Activated T-helper 2 cell treated with anti-CD3 and anti-CD28 coated beads, Interferon-gamma antibody, Interleukin-2, Interleukin-4, amounts not matched to agents 10 μg/mL and 5 μg/mL and 100 μg/mL, durations not matched to agents 14 hours and 24 hours and 36 hours (primary cell): ENCODE measurements at regions of chr5 and their contacts with region 1.

Region 1: GRCh38 chr5:91383027-91383955 is at the start of gene ARRDC3:
- DNase-seq: peak; percentile 96
- H3K4me3 Mint-ChIP-seq: peak within 1 kb of the TSS; percentile 98
- H3K27ac Mint-ChIP-seq: peak within 1 kb of the TSS; percentile 100
- H3K4me1 Mint-ChIP-seq: peaks cover 26% of the 10 kb centered on the region
- H3K27me3 Mint-ChIP-seq: no peaks in the 10 kb centered on the region
- total RNA-seq, gene ARRDC3: 17.6 TPM in 2 replicates

Region 2: DNA sequence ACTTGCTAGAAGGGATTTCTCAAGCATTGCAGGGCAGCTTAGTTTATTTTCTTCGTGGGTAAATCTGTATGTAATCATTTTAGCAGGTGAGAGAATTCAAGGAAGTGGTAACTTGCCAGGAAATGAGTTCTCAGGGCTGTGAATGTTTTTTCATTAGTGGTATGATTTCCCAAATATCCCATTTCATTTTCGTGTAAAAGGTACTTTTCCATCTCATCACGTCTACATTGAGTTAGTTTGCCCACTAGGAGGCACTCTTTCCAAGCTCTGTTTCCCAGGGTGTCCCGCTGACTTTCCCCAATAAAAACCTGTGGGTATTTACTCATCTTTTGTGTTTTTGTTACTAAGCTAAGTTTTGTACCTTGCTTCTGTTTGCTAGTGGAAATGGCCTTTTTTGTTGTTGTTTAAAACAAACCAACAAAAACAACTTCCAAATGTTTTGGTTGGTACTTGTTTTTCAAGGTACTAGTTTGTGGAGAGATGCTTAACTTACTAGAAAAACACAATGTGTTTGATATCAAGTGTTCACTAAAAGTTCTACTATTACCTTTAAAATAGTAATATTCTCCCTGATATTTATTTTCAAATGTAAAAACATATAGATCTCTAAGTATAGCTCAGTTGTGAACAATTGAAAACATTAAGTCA is 451.1 kb before region 1 on chr5:
- intact Hi-C with region 1: loop called (anchors 2 kb)
- DNase-seq: no peak
- H3K4me3 Mint-ChIP-seq: no peak overlapping the region
- H3K27ac Mint-ChIP-seq: no peak overlapping the region
- H3K4me1 Mint-ChIP-seq: peaks cover 21% of the 10 kb centered on the region
- H3K27me3 Mint-ChIP-seq: peaks cover 4% of the 10 kb centered on the region

Region 3: DNA sequence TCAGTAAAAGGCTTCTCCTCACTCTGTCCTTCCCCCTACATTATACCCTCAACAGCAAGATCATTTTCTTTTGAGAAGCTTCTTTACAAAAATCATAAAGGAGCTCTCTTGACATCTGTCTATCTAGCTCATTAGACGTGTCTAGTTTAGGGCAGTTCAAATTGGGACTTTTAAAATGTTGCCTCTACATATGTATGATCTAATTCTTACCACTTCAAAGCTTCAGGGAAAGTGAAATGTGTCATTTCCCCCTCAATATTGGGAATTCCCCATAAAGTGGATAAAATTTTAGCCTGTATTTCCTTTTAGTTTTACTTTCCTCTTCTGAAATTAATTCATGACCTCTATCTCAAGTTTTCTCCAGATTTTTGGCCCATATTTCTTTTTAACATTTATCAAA is 323.9 kb before region 1 on chr5:
- intact Hi-C with region 1: loop called (anchors 2 kb)
- DNase-seq: no peak
- H3K4me3 Mint-ChIP-seq: no peak overlapping the region
- H3K27ac Mint-ChIP-seq: no peak overlapping the region
- H3K4me1 Mint-ChIP-seq: peaks cover 16% of the 10 kb centered on the region
- H3K27me3 Mint-ChIP-seq: peaks cover 26% of the 10 kb centered on the region

Region 4: DNA sequence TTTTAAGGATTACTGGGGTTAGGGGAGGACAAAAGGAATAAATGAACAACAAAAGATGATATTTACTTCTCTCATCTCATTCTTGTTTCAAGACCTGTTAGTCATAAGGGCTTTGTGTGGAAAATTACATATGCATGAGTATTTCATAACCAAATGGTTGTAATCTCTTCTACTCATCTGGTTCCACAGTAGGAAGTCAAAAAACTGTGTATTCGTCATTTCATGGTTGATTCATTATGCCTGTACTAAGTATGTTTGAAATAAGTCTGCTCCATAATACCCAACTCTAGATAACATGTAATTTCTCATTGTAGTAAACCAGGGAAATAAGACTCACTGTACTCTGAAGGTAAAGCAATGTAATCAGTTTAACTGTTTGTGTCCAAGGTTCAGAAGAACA is 213.0 kb before region 1 on chr5:
- intact Hi-C with region 1: loop called (anchors 1 kb)
- DNase-seq: no peak
- H3K4me3 Mint-ChIP-seq: no peak overlapping the region
- H3K27ac Mint-ChIP-seq: peak overlapping the region; percentile 81
- H3K4me1 Mint-ChIP-seq: peaks cover 34% of the 10 kb centered on the region
- H3K27me3 Mint-ChIP-seq: no peaks in the 10 kb centered on the region

Region 5: GRCh38 chr5:91311697-91312501 is 71.4 kb before region 1 on chr5:
- intact Hi-C with region 1: loop called (anchors 1 kb)
- DNase-seq: peak; percentile 59
- H3K4me3 Mint-ChIP-seq: no peak overlapping the region
- H3K27ac Mint-ChIP-seq: peak overlapping the region; percentile 69
- H3K4me1 Mint-ChIP-seq: peaks cover 44% of the 10 kb centered on the region
- H3K27me3 Mint-ChIP-seq: no peaks in the 10 kb centered on the region